Activated CD4-positive, alpha-beta memory T cell treated with anti-CD3 and anti-CD28 coated beads for 36 hours (primary cell): ENCODE measurements at regions of chr1 and their contacts with region 1.

Region 1: GRCh38 chr1:11272832-11273594 is at the start of gene UBIAD1:
- DNase-seq: peak; percentile 90
- H3K4me3 Mint-ChIP-seq: peak within 1 kb of the TSS; percentile 96
- H3K27ac Mint-ChIP-seq: peak within 1 kb of the TSS; percentile 89
- H3K4me1 Mint-ChIP-seq: peaks cover 30% of the 10 kb centered on the region
- H3K27me3 Mint-ChIP-seq: no peaks in the 10 kb centered on the region
- total RNA-seq, gene UBIAD1: 21.4 to 22.4 TPM

Region 2: GRCh38 chr1:11262171-11263049 is 10.6 kb before region 1 on chr1 and contains the start of gene MTOR:
- CTCF ChIA-PET with region 1: interaction called, 3 read pairs
- POLR2A ChIA-PET with region 1: interaction called, 23 read pairs
- intact Hi-C with region 1: loop called (anchors 1 kb)
- DNase-seq: peak; percentile 99
- H3K4me3 Mint-ChIP-seq: peak within 1 kb of the TSS; percentile 81
- H3K27ac Mint-ChIP-seq: peak within 1 kb of the TSS; percentile 77
- H3K4me1 Mint-ChIP-seq: peaks cover 14% of the 10 kb centered on the region
- H3K27me3 Mint-ChIP-seq: no peaks in the 10 kb centered on the region
- total RNA-seq, gene MTOR: 35.8 to 39.4 TPM